ENCODE measurements at regions of chr9 and their contacts with region 1.

Region 1: DNA sequence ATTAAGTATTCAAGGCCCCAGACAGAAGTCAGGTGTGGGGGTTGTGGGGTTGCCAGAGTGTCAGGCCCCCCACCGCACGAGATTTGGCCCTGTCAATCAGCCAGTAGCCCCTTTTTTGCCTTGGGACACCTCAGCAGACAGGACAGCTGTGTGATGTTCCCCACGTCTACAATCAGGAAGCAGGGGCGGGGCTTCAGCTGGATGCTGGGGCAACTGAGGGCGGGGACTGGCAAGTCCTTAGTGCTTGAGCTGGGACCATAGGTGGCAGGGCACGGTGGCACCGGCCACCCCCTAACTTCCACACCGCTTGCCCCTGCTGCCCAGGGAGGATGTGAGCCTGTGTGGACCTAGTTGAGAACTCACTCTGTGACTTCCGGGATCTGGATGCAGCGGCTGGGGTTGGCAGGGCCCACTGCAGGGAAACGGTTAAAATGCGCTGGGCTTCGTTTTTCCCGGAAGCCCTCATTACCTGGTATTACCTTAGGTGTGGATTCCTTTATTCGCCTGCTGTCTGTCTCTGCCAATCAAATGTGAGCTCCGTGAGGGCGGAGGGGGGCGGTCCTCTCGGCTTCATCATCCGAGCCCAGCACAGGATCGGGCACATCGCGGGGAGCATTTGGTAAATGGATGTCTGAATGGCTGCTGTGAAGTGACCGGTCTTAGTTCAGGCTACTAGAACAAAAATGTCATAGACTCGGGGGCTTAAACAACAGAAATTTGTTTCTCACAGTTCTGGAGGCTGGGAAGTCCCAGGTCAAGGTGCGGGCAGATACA is 7.5 kb upstream of the GTF3C5 start:
- DNase-seq: no peak
- ATAC-seq: no peak
- H3K4me3 ChIP-seq: no peak overlapping the region
- H3K27ac ChIP-seq: no peak overlapping the region
- H3K4me1 ChIP-seq: peaks cover 0 to 3% of the 10 kb centered on the region in 2 experiments; a peak in 2 of 4 replicates
- H3K27me3 ChIP-seq: no peaks in the 10 kb centered on the region
- CTCF ChIP-seq: no peak
- POLR2A ChIP-seq: no peak
- RAD21 ChIP-seq: no peak

Region 2: DNA sequence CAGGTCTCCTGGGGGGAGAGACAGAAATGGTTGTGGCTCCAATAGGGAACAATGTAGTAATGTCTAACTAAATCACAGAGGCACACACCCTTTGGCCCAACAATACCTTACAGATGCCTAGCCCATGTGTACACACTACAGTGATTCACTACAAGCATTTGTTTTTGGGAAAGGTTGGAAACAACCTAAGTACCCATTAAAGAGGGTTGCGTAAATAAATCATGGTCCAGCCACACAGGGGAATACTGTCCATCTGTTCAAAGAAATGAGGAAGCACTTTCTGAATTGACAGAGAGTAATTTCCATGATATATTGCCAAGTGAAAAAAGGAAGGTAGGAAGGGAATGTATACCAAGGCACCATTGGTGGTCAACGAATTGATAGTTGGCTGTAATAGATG is 14.5 kb before region 1 on chr9:
- CTCF ChIA-PET with region 1: interaction called, 12 read pairs
- POLR2A ChIA-PET with region 1: no interaction called
- RAD21 ChIA-PET with region 1: no interaction called
- intact Hi-C with region 1: no loop called
- DNase-seq: no peak
- ATAC-seq: no peak
- H3K4me3 ChIP-seq: no peak overlapping the region
- H3K27ac ChIP-seq: no peak overlapping the region
- H3K4me1 ChIP-seq: no peaks in the 10 kb centered on the region
- H3K27me3 ChIP-seq: no peaks in the 10 kb centered on the region
- CTCF ChIP-seq: no peak
- POLR2A ChIP-seq: no peak
- RAD21 ChIP-seq: no peak

Measured in HCT116 (cell line).